ENCODE measurements at regions of chr17 and their contacts with region 1.

Region 1: GRCh38 chr17:54029986-54030385 is 207.3 kb downstream of the KIF2B start:
- DNase-seq: no peak
- ATAC-seq: no peak
- H3K4me3 ChIP-seq: no peak overlapping the region
- H3K27ac ChIP-seq: no peak overlapping the region
- H3K4me1 ChIP-seq: no peaks in the 10 kb centered on the region
- H3K27me3 ChIP-seq: no peaks in the 10 kb centered on the region
- CTCF ChIP-seq: no peak
- POLR2A ChIP-seq: no peak

Region 2: GRCh38 chr17:53736516-53737240 is 293.3 kb before region 1 on chr17:
- in situ Hi-C with region 1: no loop called
- intact Hi-C with region 1: no loop called
- DNase-seq: no peak
- ATAC-seq: no peak
- H3K4me3 ChIP-seq: no peak overlapping the region
- H3K27ac ChIP-seq: no peak overlapping the region
- H3K4me1 ChIP-seq: no peaks in the 10 kb centered on the region
- H3K27me3 ChIP-seq: no peaks in the 10 kb centered on the region
- CTCF ChIP-seq: no peak
- POLR2A ChIP-seq: no peak

Region 3: DNA sequence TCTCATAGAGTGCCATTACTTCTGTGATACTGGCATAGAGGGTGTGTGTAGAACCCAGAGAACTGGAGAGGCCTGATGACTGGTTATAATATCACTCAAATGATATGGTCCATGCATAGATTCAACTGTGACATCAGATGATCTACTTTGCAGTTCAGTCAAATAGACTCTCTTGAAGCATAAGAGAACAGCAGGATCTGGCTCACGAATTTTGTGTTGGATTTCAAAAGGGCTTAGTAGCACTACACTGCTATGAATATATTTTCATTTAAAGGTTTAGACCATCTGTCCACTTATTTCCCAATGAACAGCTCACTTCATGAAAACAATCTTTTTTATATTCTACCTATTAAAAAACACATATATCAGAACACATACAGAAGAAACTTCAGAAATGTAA is 87.5 kb before region 1 on chr17:
- in situ Hi-C with region 1: no loop called
- intact Hi-C with region 1: no loop called
- DNase-seq: no peak
- ATAC-seq: no peak
- H3K4me3 ChIP-seq: no peak overlapping the region
- H3K27ac ChIP-seq: no peak overlapping the region
- H3K4me1 ChIP-seq: no peaks in the 10 kb centered on the region
- H3K27me3 ChIP-seq: no peaks in the 10 kb centered on the region
- CTCF ChIP-seq: no peak
- POLR2A ChIP-seq: no peak

Region 4: DNA sequence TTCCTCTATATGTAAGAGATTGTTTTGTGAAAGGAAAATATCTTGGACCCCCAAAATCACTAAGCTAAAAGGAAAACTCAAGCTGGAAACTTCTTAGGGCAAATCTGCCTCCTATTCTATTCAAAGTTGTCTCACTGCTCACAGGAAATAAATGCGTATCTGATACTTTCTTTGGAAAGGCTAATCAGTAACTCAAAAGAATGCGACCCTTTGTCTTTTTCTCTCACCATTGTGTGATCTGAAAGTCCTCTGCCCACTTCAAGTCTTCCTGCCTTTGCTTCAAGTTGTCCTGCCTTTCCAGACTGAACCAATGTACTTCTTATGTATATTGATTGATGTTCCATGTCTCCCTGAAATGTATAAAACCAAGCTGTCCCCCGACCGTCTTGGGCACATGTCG is 50.0 kb before region 1 on chr17:
- in situ Hi-C with region 1: loop called in 1 of 4 experiments (anchors 10 kb)
- intact Hi-C with region 1: no loop called
- DNase-seq: no peak
- ATAC-seq: no peak
- H3K4me3 ChIP-seq: no peak overlapping the region
- H3K27ac ChIP-seq: no peak overlapping the region
- H3K4me1 ChIP-seq: no peaks in the 10 kb centered on the region
- H3K27me3 ChIP-seq: no peaks in the 10 kb centered on the region
- CTCF ChIP-seq: no peak
- POLR2A ChIP-seq: no peak

Region 5: DNA sequence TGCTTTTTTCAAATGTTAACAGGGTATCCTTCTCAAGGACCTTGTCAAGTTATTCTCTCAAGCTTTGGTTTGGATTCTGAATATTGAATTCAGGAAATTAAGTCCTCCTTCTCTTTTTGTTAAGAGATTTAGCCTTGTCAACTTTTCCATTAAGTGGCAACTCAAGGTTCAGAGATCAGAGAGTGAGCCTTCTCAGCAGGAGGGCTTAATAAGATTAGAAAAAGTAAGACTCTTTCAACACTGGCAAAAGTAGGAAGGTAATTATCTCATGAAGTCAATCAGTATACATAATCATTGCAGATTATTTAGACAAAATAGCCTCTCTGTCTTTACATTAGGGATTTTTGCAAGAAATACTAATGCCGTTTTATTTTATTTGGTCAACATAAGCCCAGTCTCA is 123.4 kb after region 1 on chr17:
- in situ Hi-C with region 1: loop called in 1 of 4 experiments (anchors 10 kb)
- intact Hi-C with region 1: no loop called
- DNase-seq: no peak
- ATAC-seq: no peak
- H3K4me3 ChIP-seq: no peak overlapping the region
- H3K27ac ChIP-seq: no peak overlapping the region
- H3K4me1 ChIP-seq: no peaks in the 10 kb centered on the region
- H3K27me3 ChIP-seq: no peaks in the 10 kb centered on the region
- CTCF ChIP-seq: no peak
- POLR2A ChIP-seq: no peak

Measured in gastrocnemius medialis (tissue), 4 donors.